CD4-positive, alpha-beta T cell (primary cell): ENCODE measurements at regions of chr1 and their contacts with region 1.

Region 1: DNA sequence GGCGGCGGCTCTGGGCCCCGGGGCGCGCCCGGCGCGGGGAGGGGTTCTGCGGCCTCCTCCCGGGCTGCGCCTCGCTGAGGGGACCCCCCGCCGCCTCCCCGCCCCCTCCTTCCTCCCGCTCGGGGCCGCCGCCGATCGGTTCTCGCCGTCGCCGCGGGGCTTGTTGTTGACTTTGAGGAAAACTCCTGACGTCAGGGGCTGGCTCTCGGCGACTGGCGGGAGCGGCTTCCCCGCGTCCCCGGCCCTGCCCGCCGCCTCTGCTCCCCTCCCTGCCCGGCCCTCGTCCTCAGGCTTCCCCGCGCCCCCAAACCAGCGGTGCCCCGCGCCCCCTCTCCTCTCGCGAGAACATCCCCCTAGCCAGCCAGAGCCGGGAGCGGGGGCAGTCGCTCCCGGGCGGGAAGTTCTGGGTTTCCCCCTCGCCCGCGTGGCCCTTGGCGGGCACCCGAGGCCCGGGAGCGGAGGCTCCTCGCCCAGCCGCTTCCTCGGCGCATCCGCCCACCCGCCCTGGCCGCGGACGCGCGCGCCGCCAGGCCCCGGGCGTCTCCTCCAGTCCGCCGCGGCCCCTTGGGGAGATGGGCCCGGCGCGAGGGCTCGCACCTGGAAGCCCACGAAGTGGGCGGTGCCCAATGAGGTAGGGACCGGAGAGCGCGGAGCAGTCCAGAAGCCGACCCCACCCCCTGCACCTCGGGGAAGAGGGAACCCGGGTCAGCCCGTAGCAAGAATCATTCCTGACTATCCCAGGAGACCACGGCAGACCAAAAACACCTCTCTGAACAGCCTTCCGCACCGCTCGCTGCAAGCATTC is 611 bp upstream of the AKT3 start:
- DNase-seq: peak in 11 of 14 experiments; percentile 74 to 95 (median 82)
- ATAC-seq: peak; percentile 38
- H3K4me3 ChIP-seq: peak overlapping the region; percentile 64
- H3K4me3 Mint-ChIP-seq: peak overlapping the region; percentile 98
- H3K27ac ChIP-seq: peak overlapping the region; percentile 61 to 92
- H3K27ac Mint-ChIP-seq: peak overlapping the region; percentile 96
- H3K4me1 ChIP-seq: peaks cover 6% of the 10 kb centered on the region
- H3K4me1 Mint-ChIP-seq: peaks cover 40% of the 10 kb centered on the region
- H3K27me3 ChIP-seq: peaks cover 0 to 2% of the 10 kb centered on the region in 2 experiments
- H3K27me3 Mint-ChIP-seq: no peaks in the 10 kb centered on the region
- CTCF ChIP-seq: no peak

Region 2: GRCh38 chr1:243580072-243580471 is 270.6 kb before region 1 on chr1:
- CTCF ChIA-PET with region 1: no interaction called
- POLR2A ChIA-PET with region 1: no interaction called
- intact Hi-C with region 1: no loop called
- DNase-seq: no peak
- ATAC-seq: no peak
- H3K4me3 ChIP-seq: no peak overlapping the region
- H3K4me3 Mint-ChIP-seq: no peak overlapping the region
- H3K27ac ChIP-seq: no peak overlapping the region
- H3K27ac Mint-ChIP-seq: no peak overlapping the region
- H3K4me1 ChIP-seq: no peaks in the 10 kb centered on the region
- H3K4me1 Mint-ChIP-seq: no peaks in the 10 kb centered on the region
- H3K27me3 ChIP-seq: no peaks in the 10 kb centered on the region
- H3K27me3 Mint-ChIP-seq: no peaks in the 10 kb centered on the region
- CTCF ChIP-seq: no peak

Region 3: DNA sequence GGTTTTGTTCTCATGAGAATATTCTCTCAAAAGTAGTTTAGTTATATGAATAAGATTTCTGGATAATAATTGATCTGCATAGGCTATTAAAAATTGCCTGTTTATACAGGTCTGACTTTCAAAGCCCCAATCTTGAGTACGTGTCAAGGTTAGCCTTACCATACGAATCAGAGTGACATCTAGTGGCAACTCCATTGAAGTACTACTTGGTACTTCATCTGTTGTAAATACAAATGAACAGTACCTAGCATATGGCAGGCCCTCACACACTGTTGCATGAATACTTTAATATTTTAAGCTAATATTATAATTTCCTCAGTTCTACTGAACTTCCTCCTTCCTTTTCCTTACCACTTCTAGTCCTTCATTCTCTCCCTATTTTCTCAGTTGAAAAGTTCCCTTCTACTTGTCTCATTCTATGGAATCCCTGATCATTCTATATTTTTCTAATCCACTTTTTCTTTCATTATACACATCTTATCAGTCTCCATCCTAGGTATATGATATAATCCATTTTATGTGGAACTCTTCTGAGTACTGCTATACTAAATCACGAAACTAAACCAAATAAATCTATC is 101.9 kb before region 1 on chr1:
- CTCF ChIA-PET with region 1: no interaction called
- POLR2A ChIA-PET with region 1: no interaction called
- intact Hi-C with region 1: loop called in 1 of 2 experiments (anchors 5 kb)
- DNase-seq: peak in 4 of 14 experiments; percentile 16 to 81 (median 72)
- ATAC-seq: peak; percentile 98
- H3K4me3 ChIP-seq: no peak overlapping the region
- H3K4me3 Mint-ChIP-seq: no peak overlapping the region
- H3K27ac ChIP-seq: no peak overlapping the region
- H3K27ac Mint-ChIP-seq: peak overlapping the region; percentile 52
- H3K4me1 ChIP-seq: peaks cover 2% of the 10 kb centered on the region
- H3K4me1 Mint-ChIP-seq: peaks cover 59% of the 10 kb centered on the region
- H3K27me3 ChIP-seq: no peaks in the 10 kb centered on the region
- H3K27me3 Mint-ChIP-seq: no peaks in the 10 kb centered on the region
- CTCF ChIP-seq: peak; percentile 83

Region 4: DNA sequence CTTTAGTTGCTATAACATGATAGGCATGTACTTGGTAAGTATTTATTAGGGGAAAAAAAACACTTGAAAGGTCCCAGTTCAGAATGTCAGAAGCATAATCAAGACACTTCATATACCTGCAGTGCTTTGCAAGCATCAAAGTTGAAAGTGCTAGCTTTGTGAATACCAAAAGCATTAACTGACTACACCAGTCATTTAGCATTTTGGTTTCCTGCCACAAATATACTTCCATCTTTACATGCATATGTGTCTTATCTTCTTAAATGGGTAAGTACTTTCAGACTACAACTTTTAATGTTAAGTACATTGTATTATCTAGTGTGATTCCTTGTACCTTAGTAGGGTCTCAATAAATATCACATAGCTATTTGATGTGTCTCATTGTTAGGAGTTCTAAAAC is 44.3 kb before region 1 on chr1:
- CTCF ChIA-PET with region 1: no interaction called
- POLR2A ChIA-PET with region 1: interaction called, 3 read pairs
- intact Hi-C with region 1: loop called (anchors 5 kb)
- DNase-seq: peak in 1 of 14 experiments; percentile 7
- ATAC-seq: no peak
- H3K4me3 ChIP-seq: no peak overlapping the region
- H3K4me3 Mint-ChIP-seq: peak overlapping the region; percentile 40
- H3K27ac ChIP-seq: no peak overlapping the region
- H3K27ac Mint-ChIP-seq: peak overlapping the region; percentile 62
- H3K4me1 ChIP-seq: peaks cover 27% of the 10 kb centered on the region
- H3K4me1 Mint-ChIP-seq: peaks cover 82% of the 10 kb centered on the region
- H3K27me3 ChIP-seq: no peaks in the 10 kb centered on the region
- H3K27me3 Mint-ChIP-seq: no peaks in the 10 kb centered on the region
- CTCF ChIP-seq: no peak

Region 5: GRCh38 chr1:243837907-243838535 is 12.6 kb before region 1 on chr1:
- CTCF ChIA-PET with region 1: interaction called, 3 read pairs
- POLR2A ChIA-PET with region 1: interaction called, 17 read pairs
- intact Hi-C with region 1: loop called in 1 of 2 experiments (anchors 1 kb)
- DNase-seq: peak in 3 of 14 experiments; percentile 54 to 81 (median 58)
- ATAC-seq: peak; percentile 94
- H3K4me3 ChIP-seq: no peak overlapping the region
- H3K4me3 Mint-ChIP-seq: peak overlapping the region; percentile 54
- H3K27ac ChIP-seq: peak overlapping the region; percentile 35 to 47
- H3K27ac Mint-ChIP-seq: peak overlapping the region; percentile 91
- H3K4me1 ChIP-seq: peaks cover 2% of the 10 kb centered on the region
- H3K4me1 Mint-ChIP-seq: peaks cover 77% of the 10 kb centered on the region
- H3K27me3 ChIP-seq: no peaks in the 10 kb centered on the region
- H3K27me3 Mint-ChIP-seq: no peaks in the 10 kb centered on the region
- CTCF ChIP-seq: no peak

Region 6: GRCh38 chr1:244074559-244075171 is 224.0 kb after region 1 on chr1:
- CTCF ChIA-PET with region 1: no interaction called
- POLR2A ChIA-PET with region 1: interaction called, 3 read pairs
- intact Hi-C with region 1: loop called (anchors 10 kb)
- DNase-seq: peak; percentile 56 to 89 (median 68)
- ATAC-seq: peak; percentile 93
- H3K4me3 ChIP-seq: peak overlapping the region; percentile 52
- H3K4me3 Mint-ChIP-seq: peak overlapping the region; percentile 89
- H3K27ac ChIP-seq: peak overlapping the region; percentile 58 to 67
- H3K27ac Mint-ChIP-seq: peak overlapping the region; percentile 98
- H3K4me1 ChIP-seq: peaks cover 39% of the 10 kb centered on the region
- H3K4me1 Mint-ChIP-seq: peaks cover 54% of the 10 kb centered on the region
- H3K27me3 ChIP-seq: no peaks in the 10 kb centered on the region
- H3K27me3 Mint-ChIP-seq: no peaks in the 10 kb centered on the region
- CTCF ChIP-seq: no peak

Region 7: DNA sequence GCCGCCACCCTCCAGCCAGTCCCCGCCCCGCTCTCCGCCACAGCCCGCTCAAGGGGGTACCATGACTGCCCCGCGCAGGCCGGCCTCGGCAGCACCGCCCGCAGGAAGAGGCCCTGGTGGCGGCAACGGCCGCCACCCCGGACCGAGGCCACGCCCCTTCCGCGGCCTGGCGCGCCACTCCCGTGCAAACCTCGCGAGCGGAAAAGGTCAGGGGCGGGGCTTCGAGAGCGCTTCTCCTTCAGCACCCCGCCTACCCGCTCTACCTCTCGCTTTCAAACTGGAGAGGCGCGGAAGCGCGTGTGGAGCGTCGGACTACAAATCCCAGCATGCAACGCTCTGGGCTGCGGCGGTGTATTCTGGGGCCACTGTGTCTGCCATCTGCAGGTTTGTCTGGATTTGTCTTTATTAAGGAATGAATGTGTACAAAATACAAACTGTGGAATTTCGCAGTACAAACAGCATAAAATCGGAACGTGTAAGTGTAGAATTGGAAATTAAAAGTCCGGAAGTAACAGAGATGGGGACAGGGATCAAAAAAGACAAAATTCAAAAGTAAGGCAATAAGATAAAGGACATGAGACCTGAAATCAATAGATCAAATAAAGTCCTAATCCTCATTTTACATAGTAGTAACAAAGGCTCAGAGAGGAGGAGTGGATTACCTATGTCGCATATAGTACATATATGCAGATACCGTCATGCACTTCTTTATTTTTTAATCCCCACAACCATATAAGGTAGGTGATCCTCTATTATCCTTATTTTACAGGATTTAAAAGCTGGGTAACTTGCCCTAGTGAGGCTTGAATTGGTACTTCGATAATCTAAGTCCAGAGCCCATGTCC is 601.5 kb after region 1 on chr1:
- CTCF ChIA-PET with region 1: no interaction called
- POLR2A ChIA-PET with region 1: no interaction called
- intact Hi-C with region 1: loop called in 1 of 2 experiments (anchors 10 kb)
- DNase-seq: peak; percentile 97 to 100 (median 99)
- ATAC-seq: peak; percentile 83
- H3K4me3 ChIP-seq: peak overlapping the region; percentile 86
- H3K4me3 Mint-ChIP-seq: peak overlapping the region; percentile 93
- H3K27ac ChIP-seq: peak overlapping the region; percentile 16 to 96
- H3K27ac Mint-ChIP-seq: peak overlapping the region; percentile 98
- H3K4me1 ChIP-seq: peaks cover 15% of the 10 kb centered on the region
- H3K4me1 Mint-ChIP-seq: peaks cover 42% of the 10 kb centered on the region
- H3K27me3 ChIP-seq: no peaks in the 10 kb centered on the region
- H3K27me3 Mint-ChIP-seq: no peaks in the 10 kb centered on the region
- CTCF ChIP-seq: peak; percentile 45